Activated CD4-positive, alpha-beta T cell treated with anti-CD3 and anti-CD28 coated beads for 36 hours (primary cell): ENCODE measurements at regions of chr19 and their contacts with region 1.

Region 1: DNA sequence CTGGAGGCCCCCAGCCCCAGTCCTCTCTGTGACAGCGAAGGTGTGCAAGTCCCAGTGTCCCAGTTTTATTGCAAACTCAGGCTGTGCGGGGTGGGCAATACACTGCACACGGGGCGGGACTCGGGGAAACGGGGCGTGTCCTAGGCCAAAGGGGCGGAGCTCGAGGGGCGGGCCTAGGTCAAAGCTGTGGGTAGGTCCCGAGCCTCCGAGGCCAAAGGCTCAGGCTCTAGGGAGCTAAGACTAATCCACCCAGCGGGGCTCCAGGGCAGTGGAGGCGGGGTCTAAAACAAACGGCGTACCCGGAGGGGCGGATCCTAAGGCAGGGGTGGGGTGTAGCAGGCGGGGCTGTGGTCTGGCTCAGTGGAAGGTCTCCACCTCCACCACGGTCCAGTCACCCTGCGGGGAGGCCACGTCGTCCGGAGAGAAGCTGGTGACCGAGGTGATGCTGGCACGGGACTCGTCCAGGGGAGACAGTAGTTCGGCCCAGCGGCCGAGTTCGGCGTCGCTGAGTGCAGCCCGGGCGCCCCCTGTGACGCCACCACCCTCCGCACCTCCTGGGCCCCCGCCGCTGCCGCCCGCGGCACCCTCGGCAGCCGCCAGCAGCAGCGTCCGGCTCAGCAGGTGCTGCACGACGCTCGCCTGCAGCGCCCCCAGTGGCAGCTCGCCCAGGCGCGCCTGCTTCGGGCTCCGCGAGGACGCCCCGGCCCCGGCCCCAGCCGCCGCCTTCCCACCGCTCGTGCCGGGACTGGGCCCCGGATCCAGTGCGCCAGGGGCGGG is 5.3 kb downstream of the PRR36 start:
- DNase-seq: peak; percentile 92
- ATAC-seq: peak; percentile 75
- H3K4me3 Mint-ChIP-seq: peak overlapping the region; percentile 70
- H3K27ac Mint-ChIP-seq: peak overlapping the region; percentile 51
- H3K4me1 Mint-ChIP-seq: peaks cover 47% of the 10 kb centered on the region
- H3K27me3 Mint-ChIP-seq: peaks cover 29% of the 10 kb centered on the region

Region 2: GRCh38 chr19:7629347-7630054 is 239.4 kb before region 1 on chr19 and contains the starts of genes PET100 and XAB2:
- CTCF ChIA-PET with region 1: no interaction called
- POLR2A ChIA-PET with region 1: no interaction called
- intact Hi-C with region 1: loop called in 1 of 2 experiments (anchors 2 kb)
- DNase-seq: peak; percentile 97
- ATAC-seq: peak; percentile 99
- H3K4me3 Mint-ChIP-seq: peak within 1 kb of the TSS; percentile 88
- H3K27ac Mint-ChIP-seq: peak within 1 kb of the TSS; percentile 97
- H3K4me1 Mint-ChIP-seq: peaks cover 32% of the 10 kb centered on the region
- H3K27me3 Mint-ChIP-seq: no peaks in the 10 kb centered on the region
- total RNA-seq, gene PET100: 45.1 to 99.4 TPM
- total RNA-seq, gene XAB2: 45.9 to 48.3 TPM

Region 3: GRCh38 chr19:7888145-7888825 is 19.4 kb after region 1 on chr19 and contains the start of gene LRRC8E:
- CTCF ChIA-PET with region 1: interaction called, 4 read pairs
- POLR2A ChIA-PET with region 1: no interaction called
- intact Hi-C with region 1: loop called in 1 of 2 experiments (anchors 2 kb)
- DNase-seq: peak; percentile 71
- ATAC-seq: peak; percentile 94
- H3K4me3 Mint-ChIP-seq: no peak within 1 kb of the TSS
- H3K27ac Mint-ChIP-seq: no peak within 1 kb of the TSS
- H3K4me1 Mint-ChIP-seq: no peaks in the 10 kb centered on the region
- H3K27me3 Mint-ChIP-seq: peaks cover 6% of the 10 kb centered on the region
- total RNA-seq, gene LRRC8E: not detected

Region 4: DNA sequence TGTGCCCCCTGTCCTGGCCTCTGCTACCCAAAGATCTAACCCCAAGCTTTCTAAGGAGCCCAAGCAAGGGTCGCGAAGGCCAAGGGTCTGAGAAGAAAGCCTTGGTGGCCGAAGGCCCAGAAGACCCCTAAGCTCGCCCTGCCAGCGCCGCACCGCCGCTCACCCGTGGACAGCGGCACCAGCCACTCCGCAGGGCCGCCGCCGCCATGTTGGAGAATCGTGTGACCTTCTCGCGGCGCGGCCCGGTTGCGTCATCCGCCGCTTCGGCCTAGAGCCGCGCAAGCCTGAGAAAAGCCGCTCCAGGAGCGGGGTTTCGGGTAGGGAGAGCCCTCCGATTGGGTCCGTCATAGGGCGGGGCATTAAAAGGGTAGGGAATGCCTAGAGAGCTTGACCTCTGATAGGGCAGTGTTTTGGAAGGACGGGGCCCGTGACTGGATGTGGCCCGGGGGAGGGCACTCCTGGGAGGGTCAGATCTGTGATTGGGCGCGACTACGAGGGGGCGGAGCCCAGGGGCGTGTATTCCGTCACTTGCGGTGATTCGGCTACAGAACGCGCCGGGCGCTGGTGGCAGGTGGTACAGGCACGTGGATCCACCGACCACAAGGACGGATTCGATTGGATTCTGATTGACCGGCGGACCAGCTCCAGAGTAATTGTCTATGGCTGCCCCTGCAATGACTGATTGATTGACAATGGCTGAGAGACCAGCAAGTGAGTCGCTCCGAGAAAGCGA is 74.7 kb after region 1 on chr19 and contains the start of gene TIMM44:
- CTCF ChIA-PET with region 1: interaction called, 6 read pairs
- POLR2A ChIA-PET with region 1: interaction called, 3 read pairs
- intact Hi-C with region 1: loop called in 1 of 2 experiments (anchors 1 kb)
- DNase-seq: peak; percentile 99
- ATAC-seq: peak; percentile 99
- H3K4me3 Mint-ChIP-seq: peak within 1 kb of the TSS; percentile 90
- H3K27ac Mint-ChIP-seq: peak within 1 kb of the TSS; percentile 90
- H3K4me1 Mint-ChIP-seq: peaks cover 30% of the 10 kb centered on the region
- H3K27me3 Mint-ChIP-seq: no peaks in the 10 kb centered on the region
- total RNA-seq, gene TIMM44: 80.4 to 84.0 TPM

Region 5: GRCh38 chr19:8208922-8209461 is 340.1 kb after region 1 on chr19 and contains the start of gene CERS4:
- CTCF ChIA-PET with region 1: interaction called, 3 read pairs
- POLR2A ChIA-PET with region 1: no interaction called
- intact Hi-C with region 1: loop called in 1 of 2 experiments (anchors 1 kb)
- DNase-seq: peak; percentile 89
- ATAC-seq: peak; percentile 83
- H3K4me3 Mint-ChIP-seq: peak within 1 kb of the TSS; percentile 83
- H3K27ac Mint-ChIP-seq: peak within 1 kb of the TSS; percentile 94
- H3K4me1 Mint-ChIP-seq: peaks cover 24% of the 10 kb centered on the region
- H3K27me3 Mint-ChIP-seq: no peaks in the 10 kb centered on the region
- total RNA-seq, gene CERS4: 21.2 to 21.8 TPM